Activated B cell treated with CpG ODN at 0.5 μM for 24 hours (primary cell): ENCODE measurements at regions of chr16 and their contacts with region 1.

Region 1: GRCh38 chr16:53111078-53111791 is 56.4 kb downstream of the CHD9 start:
- DNase-seq: no peak
- ATAC-seq: no peak
- H3K4me3 Mint-ChIP-seq: no peak overlapping the region
- H3K27ac Mint-ChIP-seq: peak overlapping the region; percentile 1
- H3K4me1 Mint-ChIP-seq: peaks cover 22% of the 10 kb centered on the region
- H3K27me3 Mint-ChIP-seq: no peaks in the 10 kb centered on the region
- CTCF ChIP-seq: no peak

Region 2: GRCh38 chr16:53091466-53092211 is 19.6 kb before region 1 on chr16:
- CTCF ChIA-PET with region 1: no interaction called
- POLR2A ChIA-PET with region 1: interaction called, 20 read pairs
- intact Hi-C with region 1: no loop called
- DNase-seq: peak; percentile 26
- ATAC-seq: peak; percentile 79
- H3K4me3 Mint-ChIP-seq: peak overlapping the region; percentile 79
- H3K27ac Mint-ChIP-seq: peak overlapping the region; percentile 87
- H3K4me1 Mint-ChIP-seq: peaks cover 77% of the 10 kb centered on the region
- H3K27me3 Mint-ChIP-seq: no peaks in the 10 kb centered on the region
- CTCF ChIP-seq: no peak

Region 3: DNA sequence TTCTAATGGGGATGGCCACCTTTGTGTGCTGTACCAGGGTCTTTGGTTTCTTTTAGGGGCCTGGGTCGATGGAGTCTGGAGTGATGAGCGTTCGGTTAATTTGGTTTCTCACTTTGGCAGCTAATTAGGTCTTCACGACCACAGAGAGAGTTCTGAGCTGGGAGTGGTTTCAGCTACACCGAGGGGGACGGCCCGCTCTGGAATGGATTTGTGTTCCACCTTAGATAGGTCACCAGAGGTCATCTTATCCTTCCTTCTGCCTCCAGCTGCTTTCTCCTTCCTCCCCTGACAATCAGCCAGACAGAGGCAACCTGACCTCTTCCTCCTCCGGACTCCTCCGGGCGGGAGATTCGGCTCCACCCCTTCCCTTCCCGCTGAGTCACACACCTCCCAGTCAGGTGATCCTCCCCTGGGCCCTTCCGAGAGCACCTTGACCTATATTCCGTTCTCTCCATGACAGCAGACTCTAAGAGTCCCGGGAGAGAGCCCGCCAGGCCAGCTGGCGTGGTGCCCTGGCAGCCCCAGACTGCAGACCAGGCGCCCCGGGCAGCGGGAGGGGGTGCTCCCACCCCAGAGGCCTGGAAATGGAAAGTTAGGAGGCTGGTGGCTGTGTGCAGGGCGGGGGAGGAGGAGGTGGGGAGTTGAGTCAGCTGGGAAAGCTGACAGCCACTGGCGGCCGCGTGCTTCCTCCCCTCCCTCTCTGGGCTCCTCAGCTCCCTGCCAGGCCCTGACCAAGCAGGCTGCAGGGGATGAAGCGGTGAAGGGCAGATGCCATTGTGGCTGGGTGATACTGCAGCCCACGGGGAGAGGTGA is 11.7 kb before region 1 on chr16:
- CTCF ChIA-PET with region 1: interaction called, 4 read pairs
- POLR2A ChIA-PET with region 1: interaction called, 9 read pairs
- intact Hi-C with region 1: loop called (anchors 2 kb)
- DNase-seq: peak; percentile 43
- ATAC-seq: peak; percentile 43
- H3K4me3 Mint-ChIP-seq: peak overlapping the region; percentile 83
- H3K27ac Mint-ChIP-seq: peak overlapping the region; percentile 93
- H3K4me1 Mint-ChIP-seq: peaks cover 69% of the 10 kb centered on the region
- H3K27me3 Mint-ChIP-seq: no peaks in the 10 kb centered on the region
- CTCF ChIP-seq: no peak